HEK293T (cell line): ENCODE measurements at regions of chr1 and their contacts with region 1.

Region 1: GRCh38 chr1:151976858-151977257 is 16.8 kb downstream of the S100A10 start:
- DNase-seq: no peak

Region 2: DNA sequence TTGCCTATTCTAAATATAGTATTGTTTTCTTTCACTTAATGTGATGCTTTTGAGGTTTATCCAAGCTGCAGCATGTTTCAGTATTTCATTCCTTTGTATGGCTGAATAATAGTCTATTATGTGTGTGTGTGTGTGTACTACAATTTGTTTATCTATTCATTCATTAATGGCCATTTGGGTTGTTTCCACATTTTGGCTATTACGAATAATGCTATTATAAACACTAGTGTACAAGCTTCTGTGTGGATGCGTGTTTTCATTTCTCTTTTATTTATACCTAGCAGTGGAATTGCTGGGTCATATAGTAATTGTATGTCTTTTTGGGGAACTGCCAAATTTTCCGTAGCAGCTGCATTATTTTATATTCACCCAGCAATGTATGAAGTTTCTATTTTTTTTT is 108.4 kb before region 1 on chr1:
- CTCF ChIA-PET with region 1: no interaction called
- POLR2A ChIA-PET with region 1: no interaction called
- DNase-seq: no peak

Region 3: DNA sequence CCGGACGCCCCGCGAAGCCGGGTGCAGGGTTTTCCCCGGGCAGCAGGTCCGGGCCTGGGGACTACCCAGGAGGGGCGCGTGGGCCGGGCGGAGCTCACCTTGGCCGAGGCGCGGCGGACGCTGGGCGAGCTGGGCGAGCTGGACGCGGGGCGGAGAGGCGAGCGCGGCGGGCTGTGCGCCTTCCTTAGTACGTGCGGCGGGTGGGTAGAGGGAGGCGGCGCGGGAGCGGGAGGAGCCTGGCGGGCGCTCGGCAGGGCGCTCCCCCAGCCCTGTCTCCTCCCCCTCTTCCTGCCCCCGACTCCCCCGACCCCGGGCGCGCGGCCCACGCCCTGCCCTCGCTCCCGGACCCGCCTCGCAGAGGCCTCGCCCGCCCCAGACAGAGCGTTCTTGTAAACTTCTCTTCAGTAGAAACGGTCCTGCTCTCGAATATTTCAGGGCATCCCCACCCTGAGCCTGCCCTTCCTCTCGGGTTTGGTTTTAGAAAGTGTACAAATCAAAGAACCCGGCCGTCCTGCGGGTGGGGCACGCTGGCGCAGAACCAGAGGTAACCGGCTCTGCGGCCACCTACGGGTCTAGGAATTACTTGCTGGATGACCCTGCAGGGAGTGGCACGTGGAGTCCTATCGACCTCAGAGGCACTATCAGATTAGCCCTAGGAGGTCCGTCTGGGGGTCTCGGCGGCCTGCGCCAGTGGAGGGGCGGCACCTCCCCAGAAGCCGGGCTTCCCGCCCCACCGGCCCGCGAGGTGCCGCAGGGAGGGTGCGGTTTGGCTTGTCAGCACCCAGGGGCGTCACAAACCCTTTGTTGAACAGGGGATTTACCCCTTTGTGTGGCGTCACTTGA is 17.0 kb after region 1 on chr1 and contains the start of gene S100A10:
- CTCF ChIA-PET with region 1: interaction called, 98 read pairs
- POLR2A ChIA-PET with region 1: interaction called, 27 read pairs
- DNase-seq: peak; percentile 63

Region 4: GRCh38 chr1:152047730-152048402 is 71.0 kb after region 1 on chr1:
- CTCF ChIA-PET with region 1: no interaction called
- POLR2A ChIA-PET with region 1: no interaction called
- DNase-seq: peak; percentile 85